ENCODE measurements at regions of chr5 and their contacts with region 1.

Region 1: DNA sequence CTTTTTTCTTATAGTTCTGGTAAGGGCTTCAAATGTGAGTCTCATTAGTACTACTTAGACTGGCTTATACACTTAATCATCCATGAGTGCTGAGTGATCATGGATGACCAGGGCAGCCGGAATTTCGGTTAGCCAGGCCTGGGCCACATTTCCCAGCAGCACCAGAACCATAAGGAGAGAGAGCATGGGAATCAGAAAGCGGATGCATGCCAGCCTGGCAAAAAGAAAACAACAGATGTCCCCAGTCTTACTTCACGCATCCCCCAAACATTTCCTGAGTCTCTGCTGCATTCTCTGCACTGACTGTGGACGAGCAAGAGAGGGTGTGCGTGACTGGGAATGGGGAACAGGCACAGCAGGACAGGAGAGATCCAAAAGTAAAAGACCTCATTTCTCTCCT is 371.1 kb upstream of the ZNF608 start:
- DNase-seq: no peak
- ATAC-seq: no peak
- H3K4me3 ChIP-seq: no peak overlapping the region
- H3K27ac ChIP-seq: no peak overlapping the region
- H3K4me1 ChIP-seq: no peaks in the 10 kb centered on the region; a peak in 1 of 4 replicates
- H3K27me3 ChIP-seq: no peaks in the 10 kb centered on the region
- CTCF ChIP-seq: no peak
- POLR2A ChIP-seq: no peak
- RAD21 ChIP-seq: no peak

Region 2: GRCh38 chr5:125151150-125151900 is 33.8 kb after region 1 on chr5:
- CTCF ChIA-PET with region 1: no interaction called
- POLR2A ChIA-PET with region 1: no interaction called
- RAD21 ChIA-PET with region 1: no interaction called
- intact Hi-C with region 1: loop called (anchors 2 kb)
- DNase-seq: no peak
- ATAC-seq: no peak
- H3K4me3 ChIP-seq: no peak overlapping the region
- H3K27ac ChIP-seq: no peak overlapping the region
- H3K4me1 ChIP-seq: no peaks in the 10 kb centered on the region
- H3K27me3 ChIP-seq: no peaks in the 10 kb centered on the region
- CTCF ChIP-seq: no peak
- POLR2A ChIP-seq: no peak
- RAD21 ChIP-seq: no peak

Measured in HCT116 (cell line).